HCT116 (cell line): ENCODE measurements at regions of chr15 and their contacts with region 1.

Region 1: GRCh38 chr15:51162865-51163762 is 68.4 kb upstream of the TNFAIP8L3 start:
- DNase-seq: peak; percentile 33
- ATAC-seq: peak; percentile 96
- H3K4me3 ChIP-seq: no peak overlapping the region
- H3K27ac ChIP-seq: no peak overlapping the region
- H3K4me1 ChIP-seq: peaks cover 8% of the 10 kb centered on the region in 2 experiments
- H3K27me3 ChIP-seq: no peaks in the 10 kb centered on the region
- CTCF ChIP-seq: peak; percentile 82 to 96 (median 96)
- POLR2A ChIP-seq: no peak
- RAD21 ChIP-seq: peak; percentile 82

Region 2: GRCh38 chr15:50810128-50810527 is 353.0 kb before region 1 on chr15:
- CTCF ChIA-PET with region 1: no interaction called
- POLR2A ChIA-PET with region 1: no interaction called
- RAD21 ChIA-PET with region 1: no interaction called
- intact Hi-C with region 1: no loop called
- DNase-seq: no peak
- ATAC-seq: no peak
- H3K4me3 ChIP-seq: no peak overlapping the region
- H3K27ac ChIP-seq: no peak overlapping the region
- H3K4me1 ChIP-seq: no peaks in the 10 kb centered on the region
- H3K27me3 ChIP-seq: no peaks in the 10 kb centered on the region
- CTCF ChIP-seq: no peak
- POLR2A ChIP-seq: no peak
- RAD21 ChIP-seq: no peak

Region 3: GRCh38 chr15:50857763-50858162 is 305.4 kb before region 1 on chr15:
- CTCF ChIA-PET with region 1: no interaction called
- POLR2A ChIA-PET with region 1: no interaction called
- RAD21 ChIA-PET with region 1: no interaction called
- intact Hi-C with region 1: no loop called
- DNase-seq: no peak
- ATAC-seq: no peak
- H3K4me3 ChIP-seq: no peak overlapping the region
- H3K27ac ChIP-seq: no peak overlapping the region
- H3K4me1 ChIP-seq: no peaks in the 10 kb centered on the region
- H3K27me3 ChIP-seq: no peaks in the 10 kb centered on the region
- CTCF ChIP-seq: no peak
- POLR2A ChIP-seq: no peak
- RAD21 ChIP-seq: no peak

Region 4: GRCh38 chr15:51108933-51109550 is 54.1 kb before region 1 on chr15:
- CTCF ChIA-PET with region 1: no interaction called
- POLR2A ChIA-PET with region 1: no interaction called
- RAD21 ChIA-PET with region 1: no interaction called
- intact Hi-C with region 1: no loop called
- DNase-seq: no peak
- ATAC-seq: no peak
- H3K4me3 ChIP-seq: no peak overlapping the region
- H3K27ac ChIP-seq: no peak overlapping the region
- H3K4me1 ChIP-seq: peaks cover 0 to 4% of the 10 kb centered on the region in 2 experiments; a peak in 1 of 4 replicates
- H3K27me3 ChIP-seq: no peaks in the 10 kb centered on the region
- CTCF ChIP-seq: no peak
- POLR2A ChIP-seq: no peak
- RAD21 ChIP-seq: no peak

Region 5: DNA sequence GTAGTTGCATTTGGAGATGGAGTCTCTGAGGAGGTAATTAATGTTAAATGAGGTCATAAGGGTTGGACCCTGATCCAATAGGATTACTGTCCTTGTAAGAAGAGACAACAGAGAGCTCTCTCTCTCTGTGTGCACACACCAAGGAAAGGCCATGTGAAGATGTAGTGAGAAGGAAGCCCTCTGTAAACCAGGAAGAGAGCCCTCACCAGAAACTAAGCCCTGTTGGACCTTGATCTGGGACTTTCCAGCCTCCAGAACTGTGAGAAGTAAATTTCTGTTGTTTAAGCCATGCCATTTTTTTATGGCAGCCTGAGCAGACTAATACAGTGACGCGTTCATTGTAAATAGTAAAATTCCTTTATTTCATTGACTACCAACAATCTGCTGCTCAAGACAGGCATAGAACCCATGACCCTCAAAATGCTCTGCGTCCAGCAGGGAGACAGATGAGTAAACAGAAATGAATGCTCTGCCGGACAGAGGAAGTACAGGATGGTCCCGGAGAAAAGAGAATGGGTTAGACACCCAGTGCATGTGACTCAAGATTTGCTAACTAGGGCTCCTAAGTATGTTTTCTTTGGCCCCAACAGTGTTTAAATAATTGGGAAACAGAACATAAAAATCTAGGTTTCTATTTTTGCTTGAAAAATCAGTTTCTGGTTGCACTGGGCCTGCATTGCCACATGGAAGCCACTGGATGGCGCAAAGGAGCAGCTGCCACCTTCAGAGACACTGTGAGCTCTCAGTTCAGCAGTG is 30.6 kb before region 1 on chr15:
- CTCF ChIA-PET with region 1: interaction called, 17 read pairs
- POLR2A ChIA-PET with region 1: no interaction called
- RAD21 ChIA-PET with region 1: no interaction called
- intact Hi-C with region 1: no loop called
- DNase-seq: peak; percentile 15
- ATAC-seq: peak; percentile 91
- H3K4me3 ChIP-seq: no peak overlapping the region
- H3K27ac ChIP-seq: no peak overlapping the region
- H3K4me1 ChIP-seq: peaks cover 0 to 11% of the 10 kb centered on the region in 2 experiments; a peak in 2 of 4 replicates
- H3K27me3 ChIP-seq: no peaks in the 10 kb centered on the region
- CTCF ChIP-seq: peak; percentile 43 to 98 (median 94); a peak in 5 of 6 replicates
- POLR2A ChIP-seq: no peak
- RAD21 ChIP-seq: peak; percentile 51; the same call in 1 of the 2 replicates

Region 6: GRCh38 chr15:51192521-51193280 is 29.6 kb after region 1 on chr15:
- CTCF ChIA-PET with region 1: interaction called, 81 read pairs
- POLR2A ChIA-PET with region 1: interaction called, 5 read pairs
- RAD21 ChIA-PET with region 1: interaction called, 7 read pairs
- intact Hi-C with region 1: loop called (anchors 1 kb)
- DNase-seq: peak; percentile 61
- ATAC-seq: peak; percentile 99
- H3K4me3 ChIP-seq: no peak overlapping the region
- H3K27ac ChIP-seq: no peak overlapping the region
- H3K4me1 ChIP-seq: peaks cover 0 to 4% of the 10 kb centered on the region in 2 experiments; a peak in 3 of 4 replicates
- H3K27me3 ChIP-seq: no peaks in the 10 kb centered on the region; the same call in 1 of the 2 replicates
- CTCF ChIP-seq: peak; percentile 66 to 97 (median 96); a peak in 5 of 6 replicates
- POLR2A ChIP-seq: no peak
- RAD21 ChIP-seq: peak; percentile 73

Region 7: GRCh38 chr15:51286791-51287190 is 123.7 kb after region 1 on chr15:
- CTCF ChIA-PET with region 1: interaction called, 10 read pairs
- POLR2A ChIA-PET with region 1: no interaction called
- RAD21 ChIA-PET with region 1: no interaction called
- intact Hi-C with region 1: loop called (anchors 10 kb)
- DNase-seq: no peak
- ATAC-seq: peak; percentile 74
- H3K4me3 ChIP-seq: no peak overlapping the region
- H3K27ac ChIP-seq: no peak overlapping the region
- H3K4me1 ChIP-seq: no peaks in the 10 kb centered on the region
- H3K27me3 ChIP-seq: no peaks in the 10 kb centered on the region; the same call in 1 of the 2 replicates
- CTCF ChIP-seq: peak; percentile 37 to 43 (median 39); a peak in 4 of 6 replicates
- POLR2A ChIP-seq: no peak
- RAD21 ChIP-seq: peak; percentile 46

Region 8: DNA sequence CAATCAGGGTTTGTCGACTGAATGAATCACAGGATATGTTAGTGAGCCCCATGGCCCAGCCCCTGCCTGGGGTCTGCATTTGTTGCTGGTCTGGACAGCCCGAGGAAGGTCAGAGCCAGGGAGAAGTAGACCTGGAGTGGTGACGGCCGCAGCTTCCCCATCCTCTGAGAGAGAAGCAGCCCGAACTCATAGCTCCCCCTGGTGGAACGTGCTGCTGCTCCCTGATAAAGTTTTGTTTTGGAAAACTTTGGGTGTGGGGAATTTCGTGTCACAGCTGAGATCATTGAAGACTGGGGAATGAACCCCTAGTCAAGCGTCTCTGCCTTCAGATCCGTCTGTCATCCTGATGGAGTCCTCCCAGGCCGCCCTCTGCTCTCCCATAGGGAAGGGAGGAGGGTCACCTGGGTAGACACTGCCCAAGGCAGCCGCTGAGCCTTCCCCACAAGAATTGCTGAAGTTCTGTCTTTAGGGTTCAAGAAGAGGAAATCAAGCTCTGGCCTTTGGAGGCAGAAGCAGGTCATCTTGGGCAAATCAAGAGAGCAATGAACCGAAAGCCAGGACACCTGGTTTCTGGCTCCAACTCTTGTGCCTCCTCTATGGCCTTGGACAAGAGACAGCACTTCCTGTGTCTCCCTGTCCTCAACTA is 238.9 kb after region 1 on chr15:
- CTCF ChIA-PET with region 1: interaction called, 68 read pairs
- POLR2A ChIA-PET with region 1: no interaction called
- RAD21 ChIA-PET with region 1: interaction called in 1 of 2 experiments, 4 read pairs
- intact Hi-C with region 1: loop called (anchors 1 kb)
- DNase-seq: no peak
- ATAC-seq: peak; percentile 81
- H3K4me3 ChIP-seq: no peak overlapping the region
- H3K27ac ChIP-seq: no peak overlapping the region
- H3K4me1 ChIP-seq: no peaks in the 10 kb centered on the region
- H3K27me3 ChIP-seq: no peaks in the 10 kb centered on the region
- CTCF ChIP-seq: peak; percentile 40 to 84 (median 82); a peak in 5 of 6 replicates
- POLR2A ChIP-seq: no peak
- RAD21 ChIP-seq: peak; percentile 60